Colonic mucosa (tissue), 4 donors: ENCODE measurements at regions of chr5 and their contacts with region 1.

Region 1: GRCh38 chr5:113922343-113922742 is 408.8 kb downstream of the YTHDC2 start:
- DNase-seq: no peak
- H3K4me3 ChIP-seq: no peak overlapping the region
- H3K27ac ChIP-seq: no peak overlapping the region
- H3K4me1 ChIP-seq: no peaks in the 10 kb centered on the region
- H3K27me3 ChIP-seq: no peaks in the 10 kb centered on the region
- CTCF ChIP-seq: no peak

Region 2: GRCh38 chr5:113984928-113985327 is 62.6 kb after region 1 on chr5:
- intact Hi-C with region 1: no loop called
- DNase-seq: no peak
- H3K4me3 ChIP-seq: no peak overlapping the region
- H3K27ac ChIP-seq: no peak overlapping the region
- H3K4me1 ChIP-seq: no peaks in the 10 kb centered on the region
- H3K27me3 ChIP-seq: no peaks in the 10 kb centered on the region
- CTCF ChIP-seq: no peak

Region 3: DNA sequence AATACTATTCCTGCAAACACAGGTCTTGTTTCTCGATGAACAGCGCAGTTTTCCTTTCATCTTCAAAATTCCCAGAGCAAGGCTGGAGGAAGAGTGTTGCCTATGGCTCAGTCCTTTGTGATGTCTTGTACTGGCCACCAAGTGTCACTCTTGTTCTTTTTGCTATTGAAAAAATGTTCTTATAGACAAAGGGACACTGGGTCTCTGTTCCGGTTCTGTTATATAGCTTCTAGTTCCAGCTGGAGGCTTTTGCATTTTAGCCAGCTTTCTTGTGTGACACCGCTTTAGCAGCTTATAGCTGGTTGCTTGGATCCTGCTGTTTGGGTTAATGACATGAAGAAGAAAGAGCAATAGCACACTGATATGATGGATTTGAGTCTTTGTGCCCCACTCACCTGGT is 95.8 kb after region 1 on chr5:
- intact Hi-C with region 1: loop called (anchors 10 kb)
- DNase-seq: no peak
- H3K4me3 ChIP-seq: no peak overlapping the region
- H3K27ac ChIP-seq: no peak overlapping the region
- H3K4me1 ChIP-seq: no peaks in the 10 kb centered on the region
- H3K27me3 ChIP-seq: no peaks in the 10 kb centered on the region
- CTCF ChIP-seq: no peak